Heart right ventricle (tissue), 16 donors: ENCODE measurements at regions of chr17 and their contacts with region 1.

Region 1: DNA sequence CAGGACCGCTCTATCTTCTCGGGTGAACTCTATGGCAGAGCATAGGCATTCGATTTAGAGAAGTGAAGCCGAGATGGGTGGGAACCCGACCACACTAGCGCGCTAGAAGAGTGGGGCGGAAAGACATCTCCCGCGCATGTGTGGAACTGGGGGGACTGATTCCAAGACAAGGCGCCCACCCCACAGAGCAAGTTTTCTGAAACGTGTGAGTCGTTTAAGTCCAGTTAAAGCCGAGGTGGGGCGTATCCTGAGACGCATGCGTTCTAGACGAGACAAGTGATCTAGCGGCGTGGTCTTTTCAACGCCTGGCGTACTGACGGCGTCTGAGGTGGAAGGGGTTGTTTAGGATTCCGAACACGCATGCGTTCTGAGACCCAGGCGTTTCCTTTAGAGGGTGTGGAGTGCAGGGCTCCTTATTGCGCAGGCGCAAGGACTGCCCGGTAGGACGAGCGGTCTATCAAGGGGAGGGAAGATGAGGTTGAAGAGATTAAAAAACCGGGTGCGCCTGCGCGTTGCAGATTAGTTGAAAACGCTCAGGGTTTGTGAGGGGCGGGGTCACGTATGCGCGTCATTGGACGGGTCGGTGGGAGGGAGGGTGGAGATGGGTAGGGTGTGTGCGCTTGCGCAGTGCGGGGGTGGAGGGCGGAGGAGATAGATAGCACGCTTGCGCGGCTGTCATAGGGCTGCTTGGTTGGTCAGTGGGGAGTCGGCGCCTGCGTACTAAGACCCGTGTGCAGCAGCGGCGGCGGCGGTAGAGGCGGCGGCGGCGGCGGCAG is at the start of gene EIF5A:
- DNase-seq: peak; percentile 100
- ATAC-seq: peak; percentile 91 to 97 (median 95)
- H3K4me3 ChIP-seq: peak within 1 kb of the TSS; percentile 76 to 98 (median 91)
- H3K27ac ChIP-seq: peak within 1 kb of the TSS; percentile 87 to 100 (median 98)
- H3K4me1 ChIP-seq: peaks cover 0 to 43% (median 29%) of the 10 kb centered on the region in 9 donors
- H3K27me3 ChIP-seq: no peaks in the 10 kb centered on the region
- CTCF ChIP-seq: no peak
- total RNA-seq, gene EIF5A: 197 to 444 (median 248) TPM

Region 2: DNA sequence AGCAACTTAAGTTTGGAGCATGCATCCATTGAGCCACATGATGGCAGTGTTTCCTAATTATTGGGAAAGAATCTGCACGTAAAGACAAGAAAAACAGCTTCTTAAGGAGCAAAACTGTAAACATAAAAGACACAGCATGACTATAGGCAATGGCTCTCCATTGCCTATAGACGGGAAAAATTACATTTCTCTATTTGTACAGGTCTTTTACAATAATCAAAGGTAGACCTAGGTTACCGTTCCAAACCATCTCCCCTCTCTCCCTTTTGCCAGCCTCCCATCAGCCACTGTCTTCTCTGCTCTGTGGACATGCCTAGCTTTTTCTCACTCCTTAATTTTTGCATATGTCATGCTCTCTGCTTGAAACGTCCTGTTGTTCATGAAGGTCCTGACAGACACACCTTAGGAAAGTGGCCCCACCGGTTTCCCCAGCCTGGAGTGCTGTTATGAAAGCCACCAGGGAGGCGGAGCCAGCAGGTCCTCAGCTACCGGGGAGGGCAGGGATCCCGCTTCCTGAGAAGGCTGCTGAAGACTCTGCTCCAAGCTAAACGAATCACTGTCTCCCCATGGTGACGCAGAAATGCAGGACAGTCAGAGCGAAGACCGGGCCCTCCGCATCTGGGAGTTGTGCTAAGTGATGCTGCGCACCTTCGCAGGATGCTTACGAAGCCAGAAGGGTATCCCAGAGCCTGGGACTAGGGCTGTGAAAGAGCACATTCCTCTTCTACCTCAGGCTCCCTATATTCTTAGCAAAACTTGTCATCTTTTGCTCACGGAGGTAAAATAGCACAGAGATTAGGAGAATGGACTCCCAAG is 261.0 kb before region 1 on chr17:
- intact Hi-C with region 1: loop called in 1 of 10 experiments (anchors 10 kb)
- DNase-seq: no peak
- ATAC-seq: peak in 4 of 8 donors; percentile 26 to 47 (median 36)
- H3K4me3 ChIP-seq: peak overlapping the region in 7 of 10 donors; percentile 15 to 37 (median 31)
- H3K27ac ChIP-seq: peak overlapping the region in 1 of 10 donors; percentile 45
- H3K4me1 ChIP-seq: peaks cover 9 to 44% (median 37%) of the 10 kb centered on the region in 9 donors
- H3K27me3 ChIP-seq: peaks cover 5 to 63% (median 33%) of the 10 kb centered on the region in 7 donors
- CTCF ChIP-seq: peak; percentile 52 to 89 (median 84)

Region 3: GRCh38 chr17:7214300-7215135 is 92.6 kb before region 1 on chr17:
- intact Hi-C with region 1: no loop called
- DNase-seq: peak; percentile 99
- ATAC-seq: peak; percentile 89 to 94 (median 92)
- H3K4me3 ChIP-seq: peak overlapping the region; percentile 8 to 71 (median 60)
- H3K27ac ChIP-seq: peak overlapping the region in 9 of 10 donors; percentile 53 to 98 (median 69)
- H3K4me1 ChIP-seq: peaks cover 17 to 61% (median 52%) of the 10 kb centered on the region in 9 donors
- H3K27me3 ChIP-seq: no peaks in the 10 kb centered on the region
- CTCF ChIP-seq: peak in 8 of 9 donors; percentile 28 to 75 (median 54)

Region 4: GRCh38 chr17:7239091-7240027 is 67.7 kb before region 1 on chr17 and contains the start of gene PHF23:
- intact Hi-C with region 1: loop called in 2 of 10 experiments (anchors 2 to 5 kb)
- DNase-seq: peak; percentile 99
- ATAC-seq: peak; percentile 75 to 88 (median 82)
- H3K4me3 ChIP-seq: peak within 1 kb of the TSS; percentile 86 to 99 (median 96)
- H3K27ac ChIP-seq: peak within 1 kb of the TSS; percentile 76 to 100 (median 96)
- H3K4me1 ChIP-seq: peaks cover 14 to 56% (median 44%) of the 10 kb centered on the region in 9 donors
- H3K27me3 ChIP-seq: no peaks in the 10 kb centered on the region
- CTCF ChIP-seq: no peak
- total RNA-seq, gene PHF23: 17.7 to 24.5 (median 22.6) TPM

Region 5: GRCh38 chr17:7261172-7261927 is 45.7 kb before region 1 on chr17:
- intact Hi-C with region 1: loop called in 1 of 10 experiments (anchors 5 kb)
- DNase-seq: no peak
- ATAC-seq: peak; percentile 6 to 61 (median 42)
- H3K4me3 ChIP-seq: peak overlapping the region; percentile 35 to 61 (median 52)
- H3K27ac ChIP-seq: peak overlapping the region in 4 of 10 donors; percentile 11 to 65 (median 20)
- H3K4me1 ChIP-seq: peaks cover 7 to 41% (median 29%) of the 10 kb centered on the region in 9 donors
- H3K27me3 ChIP-seq: peaks cover 14 to 61% (median 46%) of the 10 kb centered on the region in 7 donors
- CTCF ChIP-seq: no peak

Region 6: DNA sequence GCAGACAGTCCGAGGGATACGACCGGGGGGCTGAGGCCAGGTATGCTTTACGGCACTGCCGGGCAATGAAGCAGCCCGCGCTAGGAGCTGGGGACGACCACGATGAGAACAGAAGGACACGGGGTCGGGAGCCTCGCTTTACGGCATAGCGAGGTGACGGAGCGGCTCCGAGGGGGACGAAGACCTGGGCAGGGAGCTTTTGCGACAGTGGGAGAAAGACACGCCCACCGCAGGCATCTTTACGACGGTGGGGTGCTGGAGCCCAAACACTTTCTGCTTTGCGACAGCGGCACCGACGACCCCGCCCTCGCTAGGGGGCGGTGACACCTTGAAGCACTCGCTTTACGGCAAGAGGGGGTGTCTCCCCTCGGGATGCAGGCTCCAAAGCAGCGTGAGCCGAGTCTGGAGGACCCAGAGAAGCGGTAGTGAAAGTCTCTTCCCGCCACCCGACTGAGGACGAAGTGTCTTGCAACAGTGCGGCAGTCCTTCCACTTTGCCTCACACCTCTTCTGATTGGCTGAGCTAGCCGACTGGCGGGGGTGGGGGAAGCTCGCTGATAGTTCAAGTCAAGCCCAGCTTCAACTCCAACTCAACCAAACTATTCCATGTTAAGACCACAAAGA is 22.4 kb after region 1 on chr17:
- intact Hi-C with region 1: loop called in 1 of 10 experiments (anchors 1 kb)
- DNase-seq: peak; percentile 98
- ATAC-seq: peak; percentile 84 to 94 (median 91)
- H3K4me3 ChIP-seq: peak overlapping the region; percentile 70 to 94 (median 85)
- H3K27ac ChIP-seq: peak overlapping the region; percentile 55 to 96 (median 89)
- H3K4me1 ChIP-seq: peaks cover 0 to 27% (median 20%) of the 10 kb centered on the region in 9 donors
- H3K27me3 ChIP-seq: peaks cover 0 to 8% (median 1%) of the 10 kb centered on the region in 7 donors
- CTCF ChIP-seq: peak in 3 of 9 donors; percentile 20 to 28 (median 24)

Region 7: GRCh38 chr17:7340179-7340578 is 33.1 kb after region 1 on chr17:
- intact Hi-C with region 1: no loop called
- DNase-seq: no peak
- ATAC-seq: no peak
- H3K4me3 ChIP-seq: no peak overlapping the region
- H3K27ac ChIP-seq: no peak overlapping the region
- H3K4me1 ChIP-seq: peaks cover 0 to 24% (median 0%) of the 10 kb centered on the region in 9 donors
- H3K27me3 ChIP-seq: peaks cover 0 to 63% (median 18%) of the 10 kb centered on the region in 7 donors
- CTCF ChIP-seq: no peak

Region 8: DNA sequence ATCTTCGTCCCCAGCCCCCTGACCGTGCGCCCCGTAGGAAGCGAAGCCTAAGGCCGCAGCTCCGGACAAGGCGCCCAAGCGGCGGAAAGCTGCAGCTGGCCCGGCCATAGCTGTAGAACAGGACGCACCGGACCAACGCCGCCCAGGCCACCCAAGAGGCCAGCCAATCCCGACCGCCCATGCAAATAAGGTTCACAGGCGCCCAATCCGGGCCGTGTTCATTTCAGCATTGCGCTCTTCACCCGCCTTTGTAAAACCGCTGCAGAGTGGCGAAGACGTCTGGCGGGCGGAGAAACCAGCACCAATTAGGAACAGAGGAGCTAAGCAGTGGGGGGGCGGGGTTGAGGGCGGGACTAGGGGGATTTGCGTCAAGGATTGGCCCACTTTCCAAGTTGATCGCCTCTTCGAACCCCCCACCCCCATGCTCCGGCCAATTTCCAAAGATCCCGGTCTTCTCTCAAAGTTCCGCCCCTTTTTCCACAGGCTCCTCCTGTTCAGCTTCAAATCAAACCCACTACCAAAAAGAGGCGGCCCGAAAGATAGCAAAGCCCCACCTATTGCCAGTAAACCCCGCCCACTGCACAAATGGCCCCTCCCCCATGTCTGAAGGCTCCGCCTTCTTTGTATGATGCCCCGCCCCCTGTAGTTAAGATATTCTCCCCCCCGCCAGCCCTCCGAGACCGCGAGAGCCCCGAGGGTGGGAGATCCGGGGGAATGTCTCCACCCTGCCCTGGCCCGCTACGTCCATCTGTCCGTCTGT is 97.1 kb after region 1 on chr17 and contains the start of gene TMEM256:
- intact Hi-C with region 1: loop called in 1 of 10 experiments (anchors 5 kb)
- DNase-seq: peak; percentile 97 to 99
- ATAC-seq: peak; percentile 91 to 97 (median 96)
- H3K4me3 ChIP-seq: peak within 1 kb of the TSS; percentile 54 to 87 (median 68)
- H3K27ac ChIP-seq: peak within 1 kb of the TSS; percentile 80 to 96 (median 88)
- H3K4me1 ChIP-seq: peaks cover 13 to 28% (median 19%) of the 10 kb centered on the region in 9 donors
- H3K27me3 ChIP-seq: peaks cover 0 to 17% (median 0%) of the 10 kb centered on the region in 7 donors
- CTCF ChIP-seq: peak in 2 of 9 donors; percentile 8 to 13
- total RNA-seq, gene TMEM256: 61.8 to 83.2 (median 74.2) TPM

Region 9: GRCh38 chr17:7572588-7573323 is 265.7 kb after region 1 on chr17:
- intact Hi-C with region 1: loop called in 1 of 10 experiments (anchors 5 kb)
- DNase-seq: peak in 1 of 2 donors; percentile 100
- ATAC-seq: peak; percentile 93 to 97 (median 94)
- H3K4me3 ChIP-seq: peak overlapping the region; percentile 87 to 100 (median 98)
- H3K27ac ChIP-seq: peak overlapping the region; percentile 95 to 100 (median 99)
- H3K4me1 ChIP-seq: peaks cover 14 to 53% (median 33%) of the 10 kb centered on the region in 9 donors
- H3K27me3 ChIP-seq: no peaks in the 10 kb centered on the region
- CTCF ChIP-seq: peak in 1 of 9 donors; percentile 6